PC-9 (cell line): ENCODE measurements at regions of chrX and their contacts with region 1.

Region 1: DNA sequence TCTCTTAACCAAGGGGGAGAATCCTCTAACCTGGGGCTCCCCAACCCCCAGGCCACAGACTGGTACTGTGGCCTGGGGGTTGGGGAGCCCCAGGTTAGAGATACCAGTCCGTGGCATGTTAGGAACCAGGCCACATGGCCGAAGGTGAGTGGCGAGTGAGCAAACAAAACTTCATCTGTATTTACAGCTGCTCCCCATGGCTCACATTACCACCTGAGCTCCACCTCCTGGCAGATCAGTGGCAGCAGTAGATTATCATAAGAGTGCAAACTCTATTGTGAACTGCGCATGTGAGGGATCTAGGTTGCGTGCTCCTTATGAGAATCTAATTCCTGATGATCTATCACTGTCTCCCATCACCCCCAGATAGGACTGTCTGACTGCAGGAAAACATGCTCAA is 957.2 kb upstream of the PRKX start:
- DNase-seq: no peak
- H3K4me3 ChIP-seq: no peak overlapping the region
- H3K27ac ChIP-seq: no peak overlapping the region
- H3K4me1 ChIP-seq: peaks cover 60% of the 10 kb centered on the region
- H3K27me3 ChIP-seq: no peaks in the 10 kb centered on the region
- CTCF ChIP-seq: no peak

Region 2: GRCh38 chrX:3940000-3940610 is 730.5 kb before region 1 on chrX:
- CTCF ChIA-PET with region 1: no interaction called
- POLR2A ChIA-PET with region 1: interaction called, 10 read pairs
- intact Hi-C with region 1: no loop called
- DNase-seq: peak; percentile 5 to 89
- H3K4me3 ChIP-seq: peak overlapping the region; percentile 25; the same call in 1 of the 2 replicates
- H3K27ac ChIP-seq: peak overlapping the region; percentile 86
- H3K4me1 ChIP-seq: peaks cover 27% of the 10 kb centered on the region
- H3K27me3 ChIP-seq: no peaks in the 10 kb centered on the region
- CTCF ChIP-seq: peak; percentile 78